AG04449 (cell line): ENCODE measurements at regions of chr10 and their contacts with region 1.

Region 1: GRCh38 chr10:78973901-78974616 is 94.7 kb upstream of the ZMIZ1 start:
- DNase-seq: no peak
- H3K4me3 ChIP-seq: peak overlapping the region; percentile 48
- CTCF ChIP-seq: no peak

Region 2: DNA sequence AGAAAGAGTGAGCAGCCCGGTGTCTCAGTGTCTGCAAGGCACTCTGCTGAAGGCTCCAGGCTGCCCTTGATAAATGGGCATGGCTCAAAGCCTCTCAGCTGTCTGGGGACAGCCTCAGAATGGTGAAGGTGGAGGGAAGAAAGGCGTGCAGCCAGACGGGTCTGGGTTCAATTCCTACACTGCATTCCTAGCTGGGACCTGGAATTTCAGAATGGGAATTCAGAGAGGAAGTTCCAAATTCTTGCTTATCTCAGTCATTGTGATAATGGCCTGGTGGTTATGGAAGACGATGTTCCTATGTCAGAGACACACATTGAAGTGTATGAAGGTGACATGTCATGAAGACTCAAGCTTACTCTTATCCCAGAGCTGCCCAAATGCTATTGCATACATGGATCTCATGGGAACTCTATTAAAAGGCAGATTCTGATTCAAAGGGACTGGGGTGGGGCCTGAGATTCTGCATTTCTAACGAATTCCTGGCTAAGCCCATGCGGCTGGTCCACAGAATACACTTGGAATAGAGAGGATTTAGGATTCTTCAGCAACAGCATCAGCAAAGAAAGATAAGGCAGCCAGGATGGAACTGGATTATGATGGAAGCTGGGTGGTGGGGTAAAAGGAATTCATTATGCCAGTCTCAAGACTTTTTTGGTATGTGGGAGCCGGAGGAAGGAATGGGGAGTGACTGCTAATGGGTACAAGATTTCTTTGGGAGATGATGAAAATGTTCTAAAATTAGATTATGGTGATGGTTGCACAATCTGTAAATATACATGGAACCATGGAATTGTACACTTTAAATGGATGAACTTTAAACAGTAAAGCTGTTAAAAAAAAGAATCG is 12.1 kb after region 1 on chr10:
- CTCF ChIA-PET with region 1: interaction called, 19 read pairs
- POLR2A ChIA-PET with region 1: interaction called, 3 read pairs
- DNase-seq: peak; percentile 55
- H3K4me3 ChIP-seq: no peak overlapping the region
- CTCF ChIP-seq: no peak